Mammary epithelial cell (primary cell): ENCODE measurements at regions of chr15 and their contacts with region 1.

Region 1: GRCh38 chr15:81176291-81176893 is 20.3 kb upstream of the IL16 start:
- DNase-seq: no peak
- H3K4me3 ChIP-seq: no peak overlapping the region
- H3K27ac ChIP-seq: no peak overlapping the region
- H3K4me1 ChIP-seq: no peaks in the 10 kb centered on the region
- H3K27me3 ChIP-seq: no peaks in the 10 kb centered on the region
- CTCF ChIP-seq: no peak

Region 2: GRCh38 chr15:81126892-81127291 is 49.5 kb before region 1 on chr15:
- CTCF ChIA-PET with region 1: no interaction called
- dilution Hi-C with region 1: loop called (anchors 10 kb)
- in situ Hi-C with region 1: no loop called
- intact Hi-C with region 1: no loop called
- DNase-seq: no peak
- H3K4me3 ChIP-seq: no peak overlapping the region
- H3K27ac ChIP-seq: no peak overlapping the region
- H3K4me1 ChIP-seq: no peaks in the 10 kb centered on the region
- H3K27me3 ChIP-seq: peaks cover 2% of the 10 kb centered on the region
- CTCF ChIP-seq: no peak

Region 3: GRCh38 chr15:81229586-81229985 is 53.2 kb after region 1 on chr15:
- CTCF ChIA-PET with region 1: interaction called, 10 read pairs
- dilution Hi-C with region 1: loop called (anchors 10 kb)
- in situ Hi-C with region 1: no loop called
- intact Hi-C with region 1: no loop called
- DNase-seq: no peak
- H3K4me3 ChIP-seq: no peak overlapping the region
- H3K27ac ChIP-seq: no peak overlapping the region
- H3K4me1 ChIP-seq: peaks cover 5% of the 10 kb centered on the region
- H3K27me3 ChIP-seq: no peaks in the 10 kb centered on the region
- CTCF ChIP-seq: no peak

Region 4: DNA sequence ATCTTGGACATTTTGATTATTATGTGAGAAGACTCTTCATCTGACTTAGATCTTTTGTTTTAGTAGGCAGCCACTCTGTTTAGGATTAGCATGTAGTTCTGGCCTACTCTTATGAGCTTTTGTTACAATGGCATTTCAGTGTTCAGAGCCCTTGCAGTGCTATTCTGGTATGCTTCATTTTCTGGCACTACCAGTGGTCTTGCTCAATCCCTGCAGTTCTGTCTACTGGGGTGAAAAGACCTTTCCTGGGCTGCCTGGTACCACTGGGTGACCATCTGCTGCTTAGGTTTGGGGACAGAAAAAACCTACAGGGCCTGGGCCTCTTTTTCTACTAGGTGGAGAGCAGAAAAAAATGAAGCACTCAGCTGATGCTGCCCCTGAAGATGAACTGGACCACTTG is 62.8 kb after region 1 on chr15:
- CTCF ChIA-PET with region 1: no interaction called
- dilution Hi-C with region 1: loop called (anchors 10 kb)
- in situ Hi-C with region 1: no loop called
- intact Hi-C with region 1: no loop called
- DNase-seq: no peak
- H3K4me3 ChIP-seq: no peak overlapping the region
- H3K27ac ChIP-seq: no peak overlapping the region
- H3K4me1 ChIP-seq: peaks cover 5% of the 10 kb centered on the region
- H3K27me3 ChIP-seq: no peaks in the 10 kb centered on the region
- CTCF ChIP-seq: no peak

Region 5: DNA sequence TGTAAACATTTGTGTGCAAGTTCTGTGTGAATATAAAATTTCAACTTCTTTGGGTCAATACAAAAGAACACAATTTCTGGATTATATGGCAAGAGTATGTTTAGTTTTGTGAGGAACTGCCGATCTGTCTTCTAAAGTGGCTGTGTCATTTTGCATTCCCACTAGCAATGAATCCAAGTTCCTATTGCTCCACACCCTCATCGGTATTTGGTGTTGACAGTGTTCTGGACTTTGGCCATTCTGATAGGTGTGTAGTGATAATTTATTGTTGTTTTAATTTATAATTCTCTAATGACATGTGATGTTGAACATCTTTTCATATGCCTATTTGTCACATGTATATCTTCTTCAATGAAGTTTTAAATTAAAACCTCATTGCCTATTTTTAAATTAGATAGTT is 255.8 kb after region 1 on chr15:
- CTCF ChIA-PET with region 1: no interaction called
- dilution Hi-C with region 1: no loop called
- in situ Hi-C with region 1: no loop called
- intact Hi-C with region 1: no loop called
- DNase-seq: no peak
- H3K4me3 ChIP-seq: no peak overlapping the region
- H3K27ac ChIP-seq: no peak overlapping the region
- H3K4me1 ChIP-seq: peaks cover 11% of the 10 kb centered on the region
- H3K27me3 ChIP-seq: no peaks in the 10 kb centered on the region
- CTCF ChIP-seq: no peak